HepG2 (cell line): ENCODE measurements at regions of chr7 and their contacts with region 1.

Region 1: GRCh38 chr7:26078437-26079336 is 73.3 kb upstream of the NFE2L3 start:
- DNase-seq: peak; percentile 57
- ATAC-seq: peak; percentile 98
- H3K4me3 ChIP-seq: peak overlapping the region in 1 of 3 experiments; percentile 30; a peak in 1 of 6 replicates
- H3K27ac ChIP-seq: no peak overlapping the region
- H3K4me1 ChIP-seq: peaks cover 28% of the 10 kb centered on the region
- H3K27me3 ChIP-seq: no peaks in the 10 kb centered on the region
- CTCF ChIP-seq: peak; percentile 84
- EP300 ChIP-seq: no peak
- POLR2A ChIP-seq: no peak
- RAD21 ChIP-seq: peak; percentile 65; the same call in 1 of the 2 replicates

Region 2: GRCh38 chr7:26284995-26285632 is 206.4 kb after region 1 on chr7:
- CTCF ChIA-PET with region 1: no interaction called
- POLR2A ChIA-PET with region 1: no interaction called
- in situ Hi-C with region 1: no loop called
- intact Hi-C with region 1: loop called (anchors 5 kb)
- DNase-seq: peak; percentile 46
- ATAC-seq: peak; percentile 75
- H3K4me3 ChIP-seq: no peak overlapping the region
- H3K27ac ChIP-seq: no peak overlapping the region
- H3K4me1 ChIP-seq: peaks cover 26% of the 10 kb centered on the region
- H3K27me3 ChIP-seq: no peaks in the 10 kb centered on the region
- CTCF ChIP-seq: peak; percentile 57
- EP300 ChIP-seq: no peak
- POLR2A ChIP-seq: no peak
- RAD21 ChIP-seq: peak; percentile 39; the same call in 1 of the 2 replicates